ENCODE measurements at regions of chr1 and their contacts with region 1.

Region 1: DNA sequence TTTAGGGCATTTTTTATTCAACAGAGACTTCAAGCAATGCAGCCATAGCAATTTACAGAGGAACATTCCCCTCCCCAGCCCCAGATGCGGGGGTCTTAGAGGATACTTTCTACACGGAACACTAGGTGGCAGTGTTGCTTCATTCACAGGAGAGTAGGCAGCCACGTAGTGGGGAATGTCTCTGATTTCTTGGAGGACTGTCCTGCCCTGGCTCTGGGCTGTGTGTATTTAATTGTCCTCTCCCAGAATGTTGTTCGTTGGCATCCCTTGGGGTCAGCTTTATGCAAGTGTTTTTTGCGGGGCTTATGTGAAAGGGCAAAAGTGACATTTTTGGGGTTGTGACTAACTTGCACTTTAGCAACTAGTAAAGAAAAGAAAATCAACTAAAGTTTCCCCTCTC is 96.9 kb downstream of the PAPPA2 start:
- DNase-seq: peak; percentile 21
- H3K4me3 ChIP-seq: no peak overlapping the region
- H3K27ac ChIP-seq: no peak overlapping the region
- H3K4me1 ChIP-seq: peaks cover 0 to 3% (median 0%) of the 10 kb centered on the region in 4 donors
- H3K27me3 ChIP-seq: no peaks in the 10 kb centered on the region
- CTCF ChIP-seq: peak; percentile 63 to 76 (median 73)
- EP300 ChIP-seq: no peak
- POLR2A ChIP-seq: no peak

Region 2: DNA sequence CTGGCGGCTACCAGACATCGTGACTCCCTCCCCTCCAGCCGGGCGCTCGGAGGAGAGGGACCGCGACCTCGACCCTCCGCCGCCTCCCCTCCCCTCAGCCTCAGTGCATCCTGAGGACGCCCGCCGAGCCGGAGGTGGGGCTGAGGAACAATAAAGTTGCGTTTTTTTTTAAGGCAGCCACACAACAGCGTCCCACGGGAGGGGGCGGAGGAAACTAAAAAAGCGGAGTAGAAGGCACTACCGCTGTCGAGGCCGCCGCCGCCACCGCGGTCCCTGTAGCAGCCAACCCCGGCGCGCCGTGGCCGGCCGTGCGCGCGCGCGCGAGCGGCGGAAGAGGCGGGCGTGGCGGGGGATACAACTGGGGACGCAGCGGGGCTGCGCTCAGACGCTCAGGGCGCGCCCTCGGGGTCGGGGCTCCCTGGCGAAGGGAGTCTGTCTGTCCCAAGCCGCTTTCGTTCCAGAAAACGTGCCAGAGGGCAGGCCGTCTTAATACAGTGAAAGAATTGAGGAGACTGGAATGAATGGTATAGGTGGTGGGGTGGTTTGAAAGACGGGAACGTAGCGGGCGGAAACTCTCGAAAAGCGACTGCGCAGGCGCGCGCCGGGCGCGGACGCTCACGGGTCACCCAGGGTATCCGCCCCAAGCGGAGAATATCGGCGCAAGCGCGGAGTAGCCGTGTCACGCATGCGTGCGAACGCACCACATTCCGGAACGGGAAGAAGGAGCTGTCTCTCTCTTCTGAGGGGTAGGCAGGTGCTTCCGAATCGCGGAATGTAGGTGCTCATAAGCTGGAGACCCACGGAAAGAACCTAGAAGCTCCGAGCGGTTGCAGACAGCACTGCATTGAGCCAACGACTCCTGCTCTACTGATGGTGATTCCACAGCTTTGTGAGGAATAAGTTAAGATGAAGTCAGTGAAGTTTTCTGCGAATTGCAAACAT is 352.6 kb before region 1 on chr1 and contains the start of gene COP1:
- in situ Hi-C with region 1: no loop called
- intact Hi-C with region 1: no loop called
- DNase-seq: peak; percentile 99
- H3K4me3 ChIP-seq: peak within 1 kb of the TSS; percentile 74 to 95 (median 78)
- H3K27ac ChIP-seq: peak within 1 kb of the TSS; percentile 97 to 99 (median 98)
- H3K4me1 ChIP-seq: peaks cover 12 to 46% (median 29%) of the 10 kb centered on the region in 4 donors
- H3K27me3 ChIP-seq: no peaks in the 10 kb centered on the region
- CTCF ChIP-seq: peak in 2 of 5 experiments; percentile 9 to 38
- EP300 ChIP-seq: no peak
- POLR2A ChIP-seq: peak; percentile 79
- total RNA-seq, gene COP1: 52.3 to 190 (median 109) TPM

Region 3: GRCh38 chr1:176682830-176683535 is 123.1 kb after region 1 on chr1:
- in situ Hi-C with region 1: no loop called
- intact Hi-C with region 1: loop called (anchors 10 kb)
- DNase-seq: no peak
- H3K4me3 ChIP-seq: no peak overlapping the region
- H3K27ac ChIP-seq: no peak overlapping the region
- H3K4me1 ChIP-seq: no peaks in the 10 kb centered on the region
- H3K27me3 ChIP-seq: no peaks in the 10 kb centered on the region
- CTCF ChIP-seq: no peak
- EP300 ChIP-seq: no peak
- POLR2A ChIP-seq: no peak

Region 4: DNA sequence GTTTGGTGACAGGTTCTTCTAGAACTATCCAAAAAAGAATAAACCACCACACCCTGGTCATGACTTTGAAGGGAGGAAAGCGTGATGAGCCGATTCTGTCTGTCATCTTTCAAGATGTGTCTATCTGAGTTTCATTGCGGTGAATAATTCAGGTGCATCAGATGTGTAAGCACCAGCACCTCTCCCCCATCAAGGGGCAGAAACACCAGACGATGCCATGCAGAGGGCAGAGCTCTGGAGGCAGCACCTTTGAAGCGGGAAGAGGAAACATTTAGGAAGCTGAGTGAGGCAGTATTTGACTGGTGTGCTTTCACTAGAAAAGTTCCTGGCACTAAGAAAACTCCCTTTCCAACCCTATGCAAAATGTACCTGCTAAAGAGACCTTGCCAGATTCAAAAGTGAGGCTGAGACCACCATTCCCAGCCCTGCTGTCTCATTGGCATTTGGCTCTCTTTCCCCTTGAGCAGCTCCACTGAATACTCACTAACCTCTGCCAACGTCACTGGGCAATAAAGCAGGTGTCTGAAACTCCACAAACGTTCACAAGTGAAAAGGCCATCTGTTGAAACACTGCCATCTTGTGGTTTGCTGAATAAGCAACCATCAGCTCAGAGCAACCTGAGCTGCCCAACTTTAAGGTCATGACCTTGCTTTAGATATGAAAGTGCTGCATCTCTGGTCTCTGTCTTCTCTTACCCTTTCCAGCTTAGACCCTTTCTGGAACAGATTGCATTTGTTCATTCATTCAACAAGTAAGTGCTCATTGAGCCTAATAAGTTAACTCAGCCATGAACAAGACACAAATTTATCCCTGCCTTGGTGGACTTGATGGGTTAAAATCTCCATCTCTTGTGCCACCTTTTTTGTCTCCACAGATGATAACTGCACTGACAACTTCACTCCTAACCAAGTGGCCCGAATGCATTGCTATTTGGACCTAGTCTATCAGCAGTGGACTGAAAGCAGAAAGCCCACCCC is 131.7 kb after region 1 on chr1:
- in situ Hi-C with region 1: loop called in 1 of 4 experiments (anchors 10 kb)
- intact Hi-C with region 1: loop called (anchors 10 kb)
- DNase-seq: peak; percentile 44
- H3K4me3 ChIP-seq: no peak overlapping the region
- H3K27ac ChIP-seq: peak overlapping the region in 3 of 4 donors; percentile 56 to 75 (median 75)
- H3K4me1 ChIP-seq: peaks cover 0 to 6% (median 4%) of the 10 kb centered on the region in 4 donors
- H3K27me3 ChIP-seq: no peaks in the 10 kb centered on the region
- CTCF ChIP-seq: peak; percentile 53 to 60 (median 58)
- EP300 ChIP-seq: no peak
- POLR2A ChIP-seq: no peak

Region 5: GRCh38 chr1:176843352-176844297 is 283.7 kb after region 1 on chr1:
- in situ Hi-C with region 1: loop called in 2 of 4 experiments (anchors 25 kb)
- intact Hi-C with region 1: loop called (anchors 2 kb)
- DNase-seq: no peak
- H3K4me3 ChIP-seq: no peak overlapping the region
- H3K27ac ChIP-seq: no peak overlapping the region
- H3K4me1 ChIP-seq: no peaks in the 10 kb centered on the region
- H3K27me3 ChIP-seq: no peaks in the 10 kb centered on the region
- CTCF ChIP-seq: peak in 4 of 5 experiments; percentile 24 to 42 (median 32)
- EP300 ChIP-seq: no peak
- POLR2A ChIP-seq: no peak

Region 6: DNA sequence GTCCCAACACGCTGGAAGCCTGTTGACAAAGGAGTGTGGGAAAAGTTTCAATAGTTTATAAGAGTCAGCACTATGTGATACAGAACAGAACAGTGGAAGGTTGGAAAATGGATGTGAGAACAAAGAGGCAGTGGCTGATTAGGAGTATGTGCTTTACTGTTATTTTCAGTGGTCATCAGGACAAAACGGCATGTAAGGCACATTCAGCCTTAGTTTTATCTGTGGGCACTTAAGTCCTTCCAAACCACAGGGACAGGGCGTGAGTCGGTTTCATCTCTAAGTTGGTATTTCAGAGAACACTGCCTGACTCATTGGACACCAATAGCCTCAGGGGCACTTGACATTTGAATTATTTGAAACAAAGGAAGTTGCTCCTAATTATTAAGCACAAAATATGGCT is 297.8 kb after region 1 on chr1:
- in situ Hi-C with region 1: loop called in 1 of 4 experiments (anchors 25 kb)
- intact Hi-C with region 1: no loop called
- DNase-seq: no peak
- H3K4me3 ChIP-seq: no peak overlapping the region
- H3K27ac ChIP-seq: no peak overlapping the region
- H3K4me1 ChIP-seq: no peaks in the 10 kb centered on the region
- H3K27me3 ChIP-seq: no peaks in the 10 kb centered on the region
- CTCF ChIP-seq: no peak
- EP300 ChIP-seq: no peak
- POLR2A ChIP-seq: no peak

Region 7: DNA sequence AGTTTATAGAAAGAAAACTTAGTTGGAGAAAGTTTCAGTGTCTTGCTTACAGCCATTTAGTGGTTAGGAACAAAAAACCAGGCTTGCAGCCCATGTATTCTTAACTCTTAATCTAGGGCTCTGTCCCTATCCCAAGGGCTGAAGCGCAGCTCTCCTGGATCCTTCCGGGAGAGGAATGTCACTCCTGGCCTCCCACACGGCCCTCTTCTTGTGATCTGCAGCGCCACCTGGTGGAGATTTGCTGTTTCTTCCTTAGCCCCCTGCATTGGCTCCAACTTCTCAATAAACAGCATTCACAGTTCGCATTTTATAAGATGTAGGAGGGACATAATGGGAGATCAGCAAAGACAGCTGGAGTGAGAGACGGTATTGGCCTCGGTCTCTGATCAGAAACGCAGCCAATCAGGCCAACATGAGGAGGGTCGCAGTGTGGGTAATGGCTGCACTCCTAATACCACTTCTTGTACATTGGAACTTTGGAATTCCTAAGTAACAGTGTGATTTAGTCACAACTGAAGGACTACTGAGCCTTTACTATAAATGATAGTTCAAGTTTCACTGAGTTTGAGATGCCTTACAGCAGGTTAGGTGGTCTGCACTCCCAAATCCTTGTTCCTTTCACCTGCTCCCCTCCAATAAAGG is 321.2 kb after region 1 on chr1:
- in situ Hi-C with region 1: loop called in 3 of 4 experiments (anchors 10 kb)
- intact Hi-C with region 1: loop called (anchors 1 kb)
- DNase-seq: peak; percentile 66
- H3K4me3 ChIP-seq: no peak overlapping the region
- H3K27ac ChIP-seq: no peak overlapping the region
- H3K4me1 ChIP-seq: no peaks in the 10 kb centered on the region
- H3K27me3 ChIP-seq: no peaks in the 10 kb centered on the region
- CTCF ChIP-seq: peak; percentile 74 to 83 (median 77)
- EP300 ChIP-seq: no peak
- POLR2A ChIP-seq: no peak

Region 8: GRCh38 chr1:177044390-177044789 is 484.5 kb after region 1 on chr1:
- in situ Hi-C with region 1: no loop called
- intact Hi-C with region 1: no loop called
- DNase-seq: no peak
- H3K4me3 ChIP-seq: no peak overlapping the region
- H3K27ac ChIP-seq: no peak overlapping the region
- H3K4me1 ChIP-seq: no peaks in the 10 kb centered on the region
- H3K27me3 ChIP-seq: no peaks in the 10 kb centered on the region
- CTCF ChIP-seq: no peak
- EP300 ChIP-seq: no peak
- POLR2A ChIP-seq: no peak